Caco-2 (cell line): ENCODE measurements at regions of chr4 and their contacts with region 1.

Region 1: DNA sequence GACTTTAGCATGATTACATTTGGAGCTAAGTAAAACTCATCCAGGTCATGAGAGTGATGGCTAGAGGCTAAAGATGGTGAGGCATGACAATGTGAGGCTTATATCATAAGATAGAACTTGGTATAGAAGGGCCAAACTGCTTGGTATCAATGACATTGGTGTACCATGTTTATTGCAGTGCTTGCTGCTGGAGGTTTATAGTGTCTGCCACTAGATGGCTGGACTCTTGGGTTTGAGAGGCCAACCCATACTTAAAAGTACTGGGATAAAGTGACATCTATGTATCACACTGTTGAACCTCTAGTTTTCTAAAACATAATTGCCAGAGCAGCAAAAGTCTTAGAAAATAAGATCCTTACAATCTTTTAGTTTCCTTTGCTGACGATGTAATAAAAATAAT is 83.0 kb upstream of the TACR3 start:
- DNase-seq: no peak
- H3K4me3 ChIP-seq: no peak overlapping the region
- H3K4me3 Mint-ChIP-seq: no peak overlapping the region
- H3K27ac Mint-ChIP-seq: no peak overlapping the region
- H3K4me1 ChIP-seq: no peaks in the 10 kb centered on the region
- H3K4me1 Mint-ChIP-seq: no peaks in the 10 kb centered on the region
- H3K27me3 ChIP-seq: no peaks in the 10 kb centered on the region
- H3K27me3 Mint-ChIP-seq: no peaks in the 10 kb centered on the region
- CTCF ChIP-seq: no peak

Region 2: GRCh38 chr4:103443324-103443723 is 359.4 kb before region 1 on chr4:
- CTCF ChIA-PET with region 1: no interaction called
- POLR2A ChIA-PET with region 1: no interaction called
- intact Hi-C with region 1: no loop called
- DNase-seq: no peak
- H3K4me3 ChIP-seq: no peak overlapping the region
- H3K4me3 Mint-ChIP-seq: no peak overlapping the region
- H3K27ac Mint-ChIP-seq: no peak overlapping the region
- H3K4me1 ChIP-seq: peaks cover 4% of the 10 kb centered on the region; the same call in 1 of the 2 replicates
- H3K4me1 Mint-ChIP-seq: no peaks in the 10 kb centered on the region
- H3K27me3 ChIP-seq: no peaks in the 10 kb centered on the region
- H3K27me3 Mint-ChIP-seq: no peaks in the 10 kb centered on the region
- CTCF ChIP-seq: no peak

Region 3: GRCh38 chr4:103786014-103786413 is 16.8 kb before region 1 on chr4:
- CTCF ChIA-PET with region 1: no interaction called
- POLR2A ChIA-PET with region 1: no interaction called
- intact Hi-C with region 1: no loop called
- DNase-seq: peak; percentile 36 to 52
- H3K4me3 ChIP-seq: no peak overlapping the region
- H3K4me3 Mint-ChIP-seq: no peak overlapping the region
- H3K27ac Mint-ChIP-seq: no peak overlapping the region
- H3K4me1 ChIP-seq: no peaks in the 10 kb centered on the region
- H3K4me1 Mint-ChIP-seq: no peaks in the 10 kb centered on the region
- H3K27me3 ChIP-seq: no peaks in the 10 kb centered on the region
- H3K27me3 Mint-ChIP-seq: no peaks in the 10 kb centered on the region
- CTCF ChIP-seq: peak; percentile 46 to 59

Region 4: DNA sequence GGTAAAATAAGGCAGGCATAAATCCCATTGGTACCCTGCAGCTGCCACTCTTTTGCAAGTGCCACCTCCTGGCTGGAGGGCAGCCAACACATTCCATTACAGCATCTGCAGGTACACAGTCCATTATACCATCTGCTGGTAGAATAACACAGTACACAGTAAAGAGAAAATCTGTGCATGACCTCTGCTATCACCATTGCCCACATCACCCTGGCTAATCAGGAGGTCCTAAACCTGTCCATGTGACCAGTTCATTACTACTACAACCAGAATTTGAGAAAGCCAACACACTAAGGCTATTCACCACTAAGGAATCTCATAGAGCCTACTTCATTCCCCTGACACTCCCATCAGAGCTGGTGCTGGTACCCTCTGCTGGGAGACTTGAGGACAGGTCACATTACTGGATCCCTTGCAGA is 93.2 kb after region 1 on chr4:
- CTCF ChIA-PET with region 1: no interaction called
- POLR2A ChIA-PET with region 1: no interaction called
- intact Hi-C with region 1: no loop called
- DNase-seq: no peak
- H3K4me3 ChIP-seq: no peak overlapping the region
- H3K4me3 Mint-ChIP-seq: no peak overlapping the region
- H3K27ac Mint-ChIP-seq: no peak overlapping the region
- H3K4me1 ChIP-seq: no peaks in the 10 kb centered on the region
- H3K4me1 Mint-ChIP-seq: no peaks in the 10 kb centered on the region
- H3K27me3 ChIP-seq: no peaks in the 10 kb centered on the region
- H3K27me3 Mint-ChIP-seq: no peaks in the 10 kb centered on the region
- CTCF ChIP-seq: no peak

Region 5: GRCh38 chr4:103934178-103934789 is 131.5 kb after region 1 on chr4:
- CTCF ChIA-PET with region 1: no interaction called
- POLR2A ChIA-PET with region 1: no interaction called
- intact Hi-C with region 1: loop called (anchors 5 kb)
- DNase-seq: peak in 1 of 2 experiments; percentile 34
- H3K4me3 ChIP-seq: no peak overlapping the region
- H3K4me3 Mint-ChIP-seq: no peak overlapping the region
- H3K27ac Mint-ChIP-seq: no peak overlapping the region
- H3K4me1 ChIP-seq: no peaks in the 10 kb centered on the region
- H3K4me1 Mint-ChIP-seq: no peaks in the 10 kb centered on the region
- H3K27me3 ChIP-seq: no peaks in the 10 kb centered on the region
- H3K27me3 Mint-ChIP-seq: no peaks in the 10 kb centered on the region
- CTCF ChIP-seq: peak; percentile 62 to 66

Region 6: DNA sequence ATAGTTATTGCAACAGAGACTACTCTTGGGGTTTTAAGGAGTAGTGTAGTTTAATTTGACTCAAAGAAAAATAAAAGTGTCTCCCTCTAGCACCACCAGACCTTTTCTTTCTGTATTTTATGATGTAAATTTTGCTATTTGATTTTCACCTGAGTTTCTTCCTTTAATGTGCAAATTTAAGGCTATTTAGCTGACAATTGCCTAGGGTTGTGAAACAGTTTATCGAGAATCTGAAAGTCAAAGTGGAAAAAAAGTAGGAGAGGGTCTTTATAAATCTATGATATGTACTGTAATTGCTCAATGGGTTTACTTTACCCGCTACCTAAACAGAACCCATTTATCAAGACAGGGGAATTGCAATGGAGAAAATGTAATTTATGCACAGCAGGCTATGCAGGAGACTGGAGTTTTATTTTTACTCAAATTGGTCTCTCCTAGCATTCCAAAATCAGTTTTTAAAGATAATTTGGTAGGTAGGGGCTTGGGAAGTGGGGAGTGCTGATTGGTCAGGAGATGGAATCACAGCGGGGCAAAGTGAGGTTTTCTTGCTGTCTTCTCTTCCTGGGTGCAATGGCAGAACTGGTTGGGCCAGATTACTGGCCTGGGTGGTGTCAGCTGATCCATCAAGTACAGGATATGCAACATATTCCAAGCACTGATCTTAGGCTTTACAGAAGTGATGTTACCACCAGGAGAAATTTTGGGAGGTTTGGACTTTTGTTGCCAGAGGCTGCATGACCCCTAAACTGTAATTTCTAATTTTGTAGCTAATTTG is 145.7 kb after region 1 on chr4:
- CTCF ChIA-PET with region 1: no interaction called
- POLR2A ChIA-PET with region 1: no interaction called
- intact Hi-C with region 1: no loop called
- DNase-seq: peak in 1 of 2 experiments; percentile 2
- H3K4me3 ChIP-seq: no peak overlapping the region
- H3K4me3 Mint-ChIP-seq: no peak overlapping the region
- H3K27ac Mint-ChIP-seq: no peak overlapping the region
- H3K4me1 ChIP-seq: peaks cover 7% of the 10 kb centered on the region
- H3K4me1 Mint-ChIP-seq: no peaks in the 10 kb centered on the region
- H3K27me3 ChIP-seq: no peaks in the 10 kb centered on the region
- H3K27me3 Mint-ChIP-seq: no peaks in the 10 kb centered on the region
- CTCF ChIP-seq: no peak